AG04449 (cell line): ENCODE measurements at regions of chr11 and their contacts with region 1.

Region 1: DNA sequence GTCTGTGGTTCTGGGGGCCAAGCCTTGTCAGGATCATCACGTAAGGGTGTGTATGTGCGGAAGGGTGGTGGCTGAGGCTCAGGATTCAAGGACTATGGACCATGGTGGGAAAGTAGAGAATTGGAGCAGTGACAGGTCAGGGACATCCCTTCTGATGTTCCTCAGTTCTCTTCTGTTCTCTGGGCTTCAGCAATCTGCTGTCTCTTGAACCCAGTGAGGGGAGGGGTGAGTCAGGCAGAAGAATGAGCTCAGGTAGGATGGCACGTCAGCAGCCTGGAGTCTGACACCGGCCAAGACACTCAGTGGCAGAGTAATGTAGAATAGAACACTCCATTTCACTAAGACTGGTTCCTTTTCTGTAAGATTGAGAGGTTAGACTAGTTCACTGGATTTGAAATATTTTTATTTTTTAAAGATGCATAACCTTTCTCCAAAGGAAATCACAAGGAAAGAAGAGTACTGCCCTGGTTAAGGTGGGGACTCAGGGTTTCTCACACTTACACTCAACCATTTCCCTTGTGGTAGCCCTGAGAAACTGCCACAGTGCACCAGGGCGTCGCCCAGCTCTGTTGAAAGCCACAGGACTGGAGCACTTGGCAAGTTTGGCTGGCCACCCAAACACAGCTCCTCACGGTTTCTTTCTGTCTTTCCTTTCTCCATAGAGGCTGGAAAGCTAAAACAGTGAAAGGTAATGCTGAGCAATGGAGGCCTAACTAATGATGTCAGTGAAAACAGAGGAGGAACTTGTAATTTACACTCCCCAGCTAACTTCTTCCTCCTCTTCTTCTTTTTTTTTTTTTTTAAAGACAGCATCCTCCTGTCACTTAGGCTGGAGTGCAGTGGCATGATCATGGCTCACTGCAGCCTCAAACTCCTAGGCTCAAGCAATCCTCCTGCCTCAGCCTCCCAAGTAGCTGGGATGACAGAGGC is 23.1 kb upstream of the MICAL2 start:
- DNase-seq: no peak
- H3K4me3 ChIP-seq: peak overlapping the region; percentile 46
- CTCF ChIP-seq: peak; percentile 20

Region 2: DNA sequence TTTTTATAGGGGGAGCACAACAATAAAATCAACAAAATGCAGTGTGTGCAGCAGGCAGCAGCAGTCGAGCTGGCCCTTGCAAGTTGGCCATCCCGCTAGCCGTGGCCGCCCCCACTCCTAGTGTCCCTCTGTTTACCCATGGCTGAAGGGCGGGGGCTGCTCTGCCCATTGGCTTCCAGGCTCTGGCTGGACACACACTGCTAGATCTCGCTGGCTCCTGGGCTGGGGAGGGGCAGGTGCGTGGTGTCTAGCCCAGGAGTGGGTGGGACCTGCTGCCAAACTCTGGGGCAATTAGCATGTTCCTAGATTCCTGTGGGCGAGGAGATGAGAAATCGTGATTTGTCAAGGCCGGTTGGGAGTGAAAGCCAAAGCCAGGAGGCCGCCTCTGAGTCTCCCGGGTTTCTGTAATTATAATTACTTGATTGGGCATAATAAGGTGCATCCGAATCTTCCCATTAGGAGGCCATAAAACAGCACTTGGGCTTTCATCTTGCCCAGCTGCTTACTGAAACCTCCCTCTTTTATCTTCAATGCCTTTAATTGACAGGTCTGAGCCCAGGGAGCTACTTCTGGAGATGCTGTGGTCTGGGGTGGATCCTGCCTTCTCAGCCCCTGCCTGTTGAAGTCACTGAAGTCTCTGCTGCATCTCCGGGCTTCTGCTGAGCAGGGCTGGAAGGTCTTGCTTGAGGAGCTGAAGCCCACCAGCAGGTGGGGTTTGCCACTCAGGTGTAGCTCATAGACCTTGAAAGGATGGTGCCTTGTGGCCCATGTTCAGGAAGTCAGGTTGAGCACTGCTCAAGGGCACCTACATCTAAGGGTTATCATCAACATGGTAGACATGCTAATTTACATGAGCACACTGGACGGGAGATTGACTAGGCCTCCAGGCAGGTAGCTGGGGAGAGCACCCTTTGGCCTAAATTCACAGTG is 34.4 kb before region 1 on chr11:
- CTCF ChIA-PET with region 1: interaction called, 24 read pairs
- POLR2A ChIA-PET with region 1: interaction called, 5 read pairs
- DNase-seq: no peak
- H3K4me3 ChIP-seq: no peak overlapping the region
- CTCF ChIP-seq: peak; percentile 31

Region 3: GRCh38 chr11:12075822-12076821 is 11.2 kb before region 1 on chr11:
- CTCF ChIA-PET with region 1: interaction called, 17 read pairs
- POLR2A ChIA-PET with region 1: interaction called, 89 read pairs
- DNase-seq: peak; percentile 100
- H3K4me3 ChIP-seq: no peak overlapping the region
- CTCF ChIP-seq: no peak

Region 4: GRCh38 chr11:12110201-12110713 is 22.9 kb after region 1 on chr11 and contains the start of gene MICAL2:
- CTCF ChIA-PET with region 1: interaction called, 4 read pairs
- POLR2A ChIA-PET with region 1: interaction called, 25 read pairs
- DNase-seq: no peak
- H3K4me3 ChIP-seq: peak within 1 kb of the TSS; percentile 87
- CTCF ChIP-seq: no peak

Region 5: DNA sequence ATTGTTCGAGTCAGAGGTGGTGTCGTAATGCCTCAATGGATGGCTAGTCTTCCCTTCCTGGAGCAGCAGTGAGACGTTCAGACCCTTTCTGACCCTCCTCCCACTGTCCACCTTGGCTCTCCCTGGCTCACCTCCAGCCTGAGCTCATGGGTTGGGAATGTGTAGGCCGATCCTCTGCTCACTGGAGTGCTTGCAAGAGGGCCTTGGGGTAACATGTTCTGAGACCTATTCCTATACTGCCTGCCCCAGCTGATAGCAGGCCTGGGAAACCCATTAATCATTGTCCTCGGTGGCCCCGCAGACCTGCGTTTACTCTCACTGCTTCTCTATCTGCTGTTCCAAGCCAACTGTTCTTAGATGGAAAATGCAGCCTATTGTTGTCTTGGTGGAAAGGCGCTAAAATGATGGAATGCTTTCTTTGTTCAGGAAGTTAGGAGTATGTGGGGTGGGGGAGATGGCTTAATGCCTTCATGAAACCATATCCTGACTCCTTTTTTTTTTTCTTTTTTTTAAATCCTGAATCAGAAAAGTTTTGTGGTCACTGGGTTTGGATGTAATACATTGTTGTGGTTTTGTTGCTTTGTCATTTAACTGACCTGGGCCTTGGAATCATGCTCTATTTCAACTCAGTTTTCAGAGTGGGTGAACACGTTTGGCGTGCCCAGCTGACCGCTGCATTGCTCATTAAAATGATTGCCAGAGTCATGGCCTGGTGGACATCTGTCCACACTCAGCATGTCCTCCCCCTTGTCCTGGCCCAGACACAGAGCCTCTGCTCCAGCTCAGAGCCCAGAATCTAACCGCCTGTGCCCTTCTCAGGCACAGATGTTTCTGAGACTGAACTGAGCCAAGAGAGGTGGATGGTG is 95.6 kb after region 1 on chr11:
- CTCF ChIA-PET with region 1: interaction called, 4 read pairs
- POLR2A ChIA-PET with region 1: interaction called, 17 read pairs
- DNase-seq: peak; percentile 83
- H3K4me3 ChIP-seq: no peak overlapping the region
- CTCF ChIP-seq: no peak

Region 6: GRCh38 chr11:12207384-12208150 is 120.2 kb after region 1 on chr11:
- CTCF ChIA-PET with region 1: interaction called, 4 read pairs
- POLR2A ChIA-PET with region 1: interaction called, 57 read pairs
- DNase-seq: peak; percentile 82
- H3K4me3 ChIP-seq: no peak overlapping the region
- CTCF ChIP-seq: no peak

Region 7: DNA sequence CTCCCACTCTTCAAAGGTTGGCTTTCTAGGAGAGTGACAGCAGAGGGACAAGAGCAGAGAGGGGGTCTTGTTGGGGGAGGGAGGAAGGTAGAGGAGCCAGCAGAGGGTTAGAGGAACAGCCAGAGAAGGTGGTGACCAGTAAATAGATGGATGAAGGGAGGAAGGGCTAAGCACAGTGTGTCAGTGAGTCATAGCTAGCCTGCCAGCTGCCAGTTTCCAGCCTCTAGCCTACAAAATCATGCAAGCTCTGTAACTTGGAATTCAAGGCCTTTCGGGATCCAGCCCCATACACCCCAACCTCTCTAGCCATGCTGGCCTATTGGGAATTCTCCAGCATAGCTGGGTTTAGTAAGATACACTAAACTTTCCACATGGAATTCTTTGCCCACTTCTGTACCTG is 439.4 kb after region 1 on chr11:
- CTCF ChIA-PET with region 1: no interaction called
- POLR2A ChIA-PET with region 1: no interaction called
- DNase-seq: no peak
- H3K4me3 ChIP-seq: no peak overlapping the region
- CTCF ChIP-seq: no peak